Activated T-helper 1 cell treated with anti-CD3 and anti-CD28 coated beads, Interleukin-12 subunit alpha, Interleukin-12 subunit beta, Interleukin-2, Interleukin-4 antibody, amounts not matched to agents 30 ng/mL and 10 ng/mL and 1 ng/mL, durations not matched to agents 14 hours and 24 hours and 36 hours (primary cell): ENCODE measurements at regions of chr2 and their contacts with region 1.

Region 1: GRCh38 chr2:231961349-231962166 is at the start of gene DIS3L2:
- DNase-seq: peak; percentile 75
- H3K4me3 Mint-ChIP-seq: peak within 1 kb of the TSS; percentile 97
- H3K27ac Mint-ChIP-seq: peak within 1 kb of the TSS; percentile 93
- H3K4me1 Mint-ChIP-seq: peaks cover 22% of the 10 kb centered on the region
- H3K27me3 Mint-ChIP-seq: peaks cover under 1% of the 10 kb centered on the region
- total RNA-seq, gene DIS3L2: 27.9 and 33.1 TPM in 2 replicates

Region 2: DNA sequence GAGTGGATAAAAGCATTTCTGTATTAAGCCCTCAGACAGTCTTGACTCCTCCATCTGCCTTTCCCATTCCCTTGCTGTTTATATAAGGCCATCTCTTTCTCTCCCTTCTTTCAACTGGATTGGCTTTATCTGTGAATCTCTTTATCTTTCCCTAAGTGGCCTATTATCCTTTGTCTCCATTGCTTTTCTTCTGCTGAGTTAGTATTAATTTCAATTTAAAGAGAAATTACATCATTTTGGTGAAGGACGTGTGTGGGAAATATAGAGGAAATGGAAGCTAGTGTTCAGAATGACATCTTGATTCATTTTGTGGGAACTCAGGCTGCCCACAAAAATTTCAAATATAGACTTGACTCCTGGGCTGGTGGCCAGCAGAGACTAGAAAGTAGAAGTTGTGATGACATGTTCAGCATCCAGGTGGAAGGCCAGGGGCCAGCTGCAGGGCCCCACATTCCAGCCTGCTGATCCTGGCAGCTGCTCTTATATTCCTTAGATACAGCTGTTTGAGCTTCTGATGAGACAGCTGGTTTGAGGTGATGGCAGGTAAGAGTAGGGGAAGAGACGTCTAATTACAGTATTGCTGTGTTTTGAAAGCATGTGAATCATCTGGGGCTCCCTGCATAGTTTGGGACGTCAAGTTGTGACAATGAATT is 52.3 kb after region 1 on chr2:
- intact Hi-C with region 1: no loop called
- DNase-seq: no peak
- H3K4me3 Mint-ChIP-seq: no peak overlapping the region
- H3K27ac Mint-ChIP-seq: no peak overlapping the region
- H3K4me1 Mint-ChIP-seq: no peaks in the 10 kb centered on the region
- H3K27me3 Mint-ChIP-seq: peaks cover 3% of the 10 kb centered on the region

Region 3: DNA sequence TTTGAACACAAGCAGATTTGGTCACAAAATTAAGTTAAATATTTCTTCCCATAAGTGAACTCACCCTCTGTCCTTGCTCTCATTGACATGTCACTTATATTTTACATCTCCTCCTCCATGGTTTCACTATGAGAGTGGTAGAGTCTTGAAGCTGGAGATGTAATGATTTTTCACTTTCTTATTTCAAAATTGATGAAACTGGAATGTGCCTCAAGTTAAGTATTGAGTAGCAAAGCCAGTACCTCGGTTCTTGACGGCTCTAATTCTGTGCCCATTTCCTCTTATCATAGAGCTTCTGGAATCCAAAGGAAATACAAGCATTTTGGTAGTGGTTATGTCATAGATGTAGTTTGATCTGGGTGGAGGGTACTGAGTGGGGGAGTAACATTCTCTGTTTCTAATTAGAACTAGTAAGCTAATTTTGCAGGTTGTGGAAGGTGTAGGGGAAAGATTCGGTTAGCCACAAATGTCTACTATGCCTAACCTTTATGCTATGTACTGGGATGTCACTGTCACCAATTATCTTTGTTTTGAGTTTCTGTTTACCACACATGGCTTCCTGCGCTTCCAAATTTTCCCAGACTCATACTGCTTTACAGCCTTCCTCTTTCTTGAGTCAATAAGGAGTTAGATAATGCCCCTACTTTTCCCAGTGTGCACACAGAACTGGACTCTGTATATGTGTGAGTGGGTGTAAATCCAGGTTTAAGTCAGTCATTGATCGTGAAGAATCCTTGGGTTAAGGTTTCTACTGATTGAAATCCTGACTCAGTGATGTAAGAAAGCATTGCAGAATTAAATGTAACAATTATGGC is 96.7 kb after region 1 on chr2:
- intact Hi-C with region 1: loop called (anchors 5 kb)
- DNase-seq: no peak
- H3K4me3 Mint-ChIP-seq: no peak overlapping the region
- H3K27ac Mint-ChIP-seq: peak overlapping the region; percentile 20
- H3K4me1 Mint-ChIP-seq: peaks cover 10% of the 10 kb centered on the region
- H3K27me3 Mint-ChIP-seq: peaks cover 8% of the 10 kb centered on the region

Region 4: GRCh38 chr2:232142049-232142448 is 180.5 kb after region 1 on chr2:
- intact Hi-C with region 1: no loop called
- DNase-seq: no peak
- H3K4me3 Mint-ChIP-seq: no peak overlapping the region
- H3K27ac Mint-ChIP-seq: no peak overlapping the region
- H3K4me1 Mint-ChIP-seq: peaks cover 12% of the 10 kb centered on the region
- H3K27me3 Mint-ChIP-seq: no peaks in the 10 kb centered on the region

Region 5: GRCh38 chr2:232190796-232191195 is 229.2 kb after region 1 on chr2:
- intact Hi-C with region 1: no loop called
- DNase-seq: no peak
- H3K4me3 Mint-ChIP-seq: no peak overlapping the region
- H3K27ac Mint-ChIP-seq: no peak overlapping the region
- H3K4me1 Mint-ChIP-seq: no peaks in the 10 kb centered on the region
- H3K27me3 Mint-ChIP-seq: no peaks in the 10 kb centered on the region

Region 6: GRCh38 chr2:232315049-232315922 is 353.7 kb after region 1 on chr2:
- intact Hi-C with region 1: loop called (anchors 2 kb)
- DNase-seq: peak; percentile 72
- H3K4me3 Mint-ChIP-seq: peak overlapping the region; percentile 78
- H3K27ac Mint-ChIP-seq: peak overlapping the region; percentile 94
- H3K4me1 Mint-ChIP-seq: peaks cover 49% of the 10 kb centered on the region
- H3K27me3 Mint-ChIP-seq: no peaks in the 10 kb centered on the region